ENCODE measurements at regions of chr6 and their contacts with region 1.

Region 1: DNA sequence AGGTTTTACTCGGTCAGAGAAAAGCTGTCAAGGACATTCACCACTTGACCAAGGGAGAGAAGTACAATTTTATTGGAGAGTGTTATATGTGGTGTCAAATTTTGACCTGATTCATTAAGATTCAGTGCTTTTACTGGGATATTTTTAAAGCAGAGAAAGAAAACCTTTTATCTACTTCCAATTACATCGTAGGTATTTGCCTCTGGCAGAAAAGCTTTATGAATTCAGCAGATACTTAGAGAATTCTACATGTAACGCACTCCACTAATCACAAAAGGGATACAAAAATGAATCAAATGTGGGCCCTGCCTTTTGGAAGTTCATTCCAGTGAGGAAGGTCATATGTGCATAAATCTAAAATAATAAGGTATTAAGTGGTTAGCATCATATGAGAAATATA is 133.7 kb downstream of the STXBP5 start:
- DNase-seq: no peak
- ATAC-seq: no peak
- H3K4me3 ChIP-seq: no peak overlapping the region
- H3K4me3 Mint-ChIP-seq: no peak overlapping the region
- H3K27ac ChIP-seq: no peak overlapping the region
- H3K27ac Mint-ChIP-seq: no peak overlapping the region
- H3K4me1 ChIP-seq: no peaks in the 10 kb centered on the region
- H3K4me1 Mint-ChIP-seq: no peaks in the 10 kb centered on the region
- H3K27me3 ChIP-seq: no peaks in the 10 kb centered on the region
- H3K27me3 Mint-ChIP-seq: no peaks in the 10 kb centered on the region
- CTCF ChIP-seq: no peak

Region 2: GRCh38 chr6:145714731-145715130 is 1623.2 kb before region 1 on chr6:
- CTCF ChIA-PET with region 1: no interaction called
- POLR2A ChIA-PET with region 1: no interaction called
- intact Hi-C with region 1: loop called in 1 of 2 experiments (anchors 10 kb)
- DNase-seq: no peak
- ATAC-seq: no peak
- H3K4me3 ChIP-seq: no peak overlapping the region
- H3K4me3 Mint-ChIP-seq: no peak overlapping the region
- H3K27ac ChIP-seq: no peak overlapping the region
- H3K27ac Mint-ChIP-seq: no peak overlapping the region
- H3K4me1 ChIP-seq: no peaks in the 10 kb centered on the region
- H3K4me1 Mint-ChIP-seq: no peaks in the 10 kb centered on the region
- H3K27me3 ChIP-seq: no peaks in the 10 kb centered on the region
- H3K27me3 Mint-ChIP-seq: no peaks in the 10 kb centered on the region
- CTCF ChIP-seq: no peak

Region 3: DNA sequence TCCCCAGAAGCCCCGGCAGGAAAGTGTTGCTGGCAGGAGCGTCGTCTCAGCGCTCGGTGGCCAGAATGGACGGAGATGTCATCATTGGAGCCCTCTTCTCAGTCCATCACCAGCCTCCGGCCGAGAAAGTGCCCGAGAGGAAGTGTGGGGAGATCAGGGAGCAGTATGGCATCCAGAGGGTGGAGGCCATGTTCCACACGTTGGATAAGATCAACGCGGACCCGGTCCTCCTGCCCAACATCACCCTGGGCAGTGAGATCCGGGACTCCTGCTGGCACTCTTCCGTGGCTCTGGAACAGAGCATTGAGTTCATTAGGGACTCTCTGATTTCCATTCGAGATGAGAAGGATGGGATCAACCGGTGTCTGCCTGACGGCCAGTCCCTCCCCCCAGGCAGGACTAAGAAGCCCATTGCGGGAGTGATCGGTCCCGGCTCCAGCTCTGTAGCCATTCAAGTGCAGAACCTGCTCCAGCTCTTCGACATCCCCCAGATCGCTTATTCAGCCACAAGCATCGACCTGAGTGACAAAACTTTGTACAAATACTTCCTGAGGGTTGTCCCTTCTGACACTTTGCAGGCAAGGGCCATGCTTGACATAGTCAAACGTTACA is 1308.2 kb before region 1 on chr6:
- CTCF ChIA-PET with region 1: no interaction called
- POLR2A ChIA-PET with region 1: no interaction called
- intact Hi-C with region 1: loop called in 1 of 2 experiments (anchors 5 kb)
- DNase-seq: no peak
- ATAC-seq: no peak
- H3K4me3 ChIP-seq: no peak overlapping the region
- H3K4me3 Mint-ChIP-seq: no peak overlapping the region
- H3K27ac ChIP-seq: no peak overlapping the region
- H3K27ac Mint-ChIP-seq: no peak overlapping the region
- H3K4me1 ChIP-seq: no peaks in the 10 kb centered on the region
- H3K4me1 Mint-ChIP-seq: peaks cover 9% of the 10 kb centered on the region
- H3K27me3 ChIP-seq: peaks cover 0 to 14% of the 10 kb centered on the region in 2 experiments
- H3K27me3 Mint-ChIP-seq: peaks cover 67% of the 10 kb centered on the region
- CTCF ChIP-seq: no peak

Region 4: DNA sequence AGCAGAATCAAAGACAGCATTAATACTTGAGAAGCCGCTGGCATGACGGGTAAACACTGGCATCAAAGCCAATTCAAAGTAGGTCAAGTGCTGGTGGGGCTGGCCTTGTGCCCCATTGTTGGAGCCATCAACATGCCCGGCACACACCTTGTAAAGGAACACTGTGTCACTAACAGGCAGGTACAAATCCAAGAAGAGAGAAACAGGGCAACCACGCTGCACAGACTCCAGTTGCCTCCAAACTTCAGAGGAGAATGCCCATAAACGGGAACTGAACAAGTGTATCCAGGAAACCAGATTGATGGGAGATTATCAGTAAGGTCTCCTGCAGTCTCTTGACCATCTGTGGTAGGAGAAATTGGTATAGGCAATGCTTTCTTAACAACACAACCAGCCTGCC is 260.7 kb before region 1 on chr6:
- CTCF ChIA-PET with region 1: no interaction called
- POLR2A ChIA-PET with region 1: no interaction called
- intact Hi-C with region 1: loop called in 1 of 2 experiments (anchors 5 kb)
- DNase-seq: no peak
- ATAC-seq: no peak
- H3K4me3 ChIP-seq: no peak overlapping the region
- H3K4me3 Mint-ChIP-seq: no peak overlapping the region
- H3K27ac ChIP-seq: no peak overlapping the region
- H3K27ac Mint-ChIP-seq: no peak overlapping the region
- H3K4me1 ChIP-seq: no peaks in the 10 kb centered on the region
- H3K4me1 Mint-ChIP-seq: no peaks in the 10 kb centered on the region
- H3K27me3 ChIP-seq: no peaks in the 10 kb centered on the region
- H3K27me3 Mint-ChIP-seq: no peaks in the 10 kb centered on the region
- CTCF ChIP-seq: no peak